ENCODE measurements at regions of chr6 and their contacts with region 1.

Region 1: DNA sequence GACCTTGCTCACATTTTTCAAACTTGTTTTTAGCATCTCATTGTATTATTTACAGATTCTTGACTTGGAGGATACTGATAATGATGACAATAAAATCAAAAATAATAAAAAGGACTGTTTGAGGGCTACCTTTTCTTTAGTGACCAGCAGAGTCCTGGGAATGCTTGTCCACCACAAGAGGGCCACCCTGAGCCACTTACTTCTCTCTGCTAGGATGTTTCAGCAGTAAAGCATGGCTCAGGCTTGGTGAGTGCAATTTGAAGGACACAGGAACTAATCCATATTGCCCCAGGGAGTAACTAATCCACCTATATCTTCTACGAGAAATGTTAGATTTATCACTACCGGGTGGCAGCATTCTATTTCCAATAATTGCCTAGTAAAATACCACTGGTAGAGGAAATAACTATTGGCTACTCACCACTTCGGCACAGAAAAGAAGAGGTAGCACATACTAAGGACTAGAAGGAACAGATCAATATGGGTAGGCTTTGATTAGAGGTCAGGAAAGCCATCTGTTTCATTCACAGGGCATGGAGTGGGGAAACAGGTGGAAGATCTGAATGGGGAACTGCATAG is 5.8 kb upstream of the KIAA0408 start:
- DNase-seq: peak; percentile 73
- ATAC-seq: peak; percentile 94
- H3K4me3 ChIP-seq: no peak overlapping the region
- H3K27ac ChIP-seq: peak overlapping the region; percentile 14
- H3K4me1 ChIP-seq: peaks cover 8% of the 10 kb centered on the region
- H3K27me3 ChIP-seq: no peaks in the 10 kb centered on the region
- CTCF ChIP-seq: peak; percentile 85

Region 2: GRCh38 chr6:127539272-127539671 is 74.3 kb after region 1 on chr6:
- intact Hi-C with region 1: loop called (anchors 10 kb)
- DNase-seq: no peak
- ATAC-seq: peak; percentile 70
- H3K4me3 ChIP-seq: no peak overlapping the region
- H3K27ac ChIP-seq: no peak overlapping the region
- H3K4me1 ChIP-seq: no peaks in the 10 kb centered on the region
- H3K27me3 ChIP-seq: no peaks in the 10 kb centered on the region
- CTCF ChIP-seq: peak; percentile 56

Region 3: DNA sequence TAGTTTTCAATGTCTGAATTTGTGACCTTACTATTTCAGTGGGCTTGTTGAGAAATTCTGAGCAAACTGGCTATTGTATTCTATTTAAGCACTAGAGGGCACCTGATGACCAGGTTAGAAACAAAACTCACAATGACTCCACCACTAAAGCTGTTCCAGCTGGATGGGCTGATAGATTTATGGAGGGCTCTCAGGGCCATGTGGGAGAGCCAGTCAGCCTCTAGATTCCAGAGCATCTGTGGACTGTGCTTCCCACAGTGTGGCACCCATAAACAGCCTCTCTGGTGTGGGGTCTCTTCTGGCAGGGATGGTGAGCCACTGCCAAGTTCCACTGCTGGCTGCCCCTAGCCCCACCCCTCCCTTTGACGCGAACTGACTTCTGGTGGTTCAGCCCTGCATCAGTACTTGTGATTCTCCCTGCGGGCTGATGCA is 141.2 kb after region 1 on chr6:
- intact Hi-C with region 1: no loop called
- DNase-seq: no peak
- ATAC-seq: peak; percentile 72
- H3K4me3 ChIP-seq: no peak overlapping the region
- H3K27ac ChIP-seq: no peak overlapping the region
- H3K4me1 ChIP-seq: no peaks in the 10 kb centered on the region
- H3K27me3 ChIP-seq: no peaks in the 10 kb centered on the region
- CTCF ChIP-seq: no peak

Measured in upper lobe of right lung (tissue), 1 donor.